Naive thymus-derived CD4-positive, alpha-beta T cell (primary cell): ENCODE measurements at regions of chr21 and their contacts with region 1.

Region 1: GRCh38 chr21:42009831-42010523 is at the start of gene ZBTB21:
- DNase-seq: peak; percentile 96 to 99 (median 98)
- ATAC-seq: peak; percentile 87
- H3K4me3 ChIP-seq: peak within 1 kb of the TSS; percentile 78
- H3K4me3 Mint-ChIP-seq: peak within 1 kb of the TSS; percentile 93 to 99 (median 96)
- H3K27ac ChIP-seq: peak within 1 kb of the TSS; percentile 92
- H3K27ac Mint-ChIP-seq: peak within 1 kb of the TSS; percentile 99 to 100 (median 99)
- H3K4me1 ChIP-seq: peaks cover 0 to 5% of the 10 kb centered on the region in 2 donors
- H3K4me1 Mint-ChIP-seq: peaks cover 7 to 48% (median 41%) of the 10 kb centered on the region in 7 donors
- H3K27me3 ChIP-seq: no peaks in the 10 kb centered on the region
- H3K27me3 Mint-ChIP-seq: peaks cover 0 to 24% (median 0%) of the 10 kb centered on the region in 5 donors
- total RNA-seq, gene ZBTB21: 16.8 to 137 (median 25.2) TPM

Region 2: GRCh38 chr21:41361786-41362604 is 648.0 kb before region 1 on chr21 and contains the start of gene MX2:
- CTCF ChIA-PET with region 1: no interaction called
- POLR2A ChIA-PET with region 1: no interaction called
- intact Hi-C with region 1: loop called (anchors 10 kb)
- DNase-seq: peak; percentile 64 to 96 (median 94)
- ATAC-seq: peak; percentile 86
- H3K4me3 ChIP-seq: peak within 1 kb of the TSS; percentile 84
- H3K4me3 Mint-ChIP-seq: peak within 1 kb of the TSS; percentile 90 to 98 (median 96)
- H3K27ac ChIP-seq: peak within 1 kb of the TSS; percentile 96
- H3K27ac Mint-ChIP-seq: peak within 1 kb of the TSS; percentile 99 to 100 (median 100)
- H3K4me1 ChIP-seq: peaks cover 21 to 38% of the 10 kb centered on the region in 2 donors
- H3K4me1 Mint-ChIP-seq: peaks cover 31 to 67% (median 60%) of the 10 kb centered on the region in 7 donors
- H3K27me3 ChIP-seq: no peaks in the 10 kb centered on the region
- H3K27me3 Mint-ChIP-seq: no peaks in the 10 kb centered on the region
- total RNA-seq, gene MX2: 84.8 to 116 (median 100) TPM

Region 3: DNA sequence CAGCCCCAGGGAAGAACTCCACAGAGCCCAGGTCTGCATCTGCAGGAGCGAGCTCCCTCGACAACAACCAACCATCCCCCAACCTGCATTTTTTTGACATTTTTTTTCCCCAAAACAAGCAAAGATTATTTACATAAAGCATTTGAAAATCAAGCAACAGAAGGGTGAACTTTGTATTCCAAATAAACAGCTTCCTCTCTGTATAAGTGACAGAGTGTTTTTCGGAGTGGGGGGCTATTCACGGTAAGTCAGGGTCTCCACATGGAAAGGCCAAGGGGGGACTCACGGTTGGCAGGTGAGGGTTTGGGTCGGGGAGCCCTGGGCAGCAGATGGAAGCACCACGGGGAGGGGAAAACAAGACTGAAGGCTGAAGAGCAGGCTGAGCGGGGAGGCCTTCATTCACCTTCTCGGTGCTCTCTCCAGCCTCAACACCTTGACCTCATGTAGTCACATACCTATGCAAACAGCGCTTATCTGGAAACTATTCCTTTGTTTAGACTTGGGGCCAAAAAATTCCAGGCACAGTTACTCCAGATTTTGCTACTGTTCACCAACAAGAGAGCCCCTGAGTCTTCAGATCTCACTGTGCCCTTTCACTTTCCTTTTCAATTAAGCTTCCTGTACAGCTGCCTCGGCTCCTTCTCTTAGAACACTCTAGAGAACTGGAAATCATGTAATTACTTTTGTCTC is 83.7 kb before region 1 on chr21:
- CTCF ChIA-PET with region 1: no interaction called
- POLR2A ChIA-PET with region 1: interaction called, 4 read pairs
- intact Hi-C with region 1: loop called (anchors 1 kb)
- DNase-seq: peak in 8 of 9 donors; percentile 36 to 75 (median 66)
- ATAC-seq: peak; percentile 85
- H3K4me3 ChIP-seq: peak overlapping the region; percentile 78
- H3K4me3 Mint-ChIP-seq: peak overlapping the region; percentile 88 to 99 (median 95)
- H3K27ac ChIP-seq: peak overlapping the region; percentile 91
- H3K27ac Mint-ChIP-seq: peak overlapping the region; percentile 94 to 100 (median 99)
- H3K4me1 ChIP-seq: peaks cover 12 to 37% of the 10 kb centered on the region in 2 donors
- H3K4me1 Mint-ChIP-seq: peaks cover 45 to 69% (median 61%) of the 10 kb centered on the region in 7 donors
- H3K27me3 ChIP-seq: no peaks in the 10 kb centered on the region
- H3K27me3 Mint-ChIP-seq: no peaks in the 10 kb centered on the region

Region 4: DNA sequence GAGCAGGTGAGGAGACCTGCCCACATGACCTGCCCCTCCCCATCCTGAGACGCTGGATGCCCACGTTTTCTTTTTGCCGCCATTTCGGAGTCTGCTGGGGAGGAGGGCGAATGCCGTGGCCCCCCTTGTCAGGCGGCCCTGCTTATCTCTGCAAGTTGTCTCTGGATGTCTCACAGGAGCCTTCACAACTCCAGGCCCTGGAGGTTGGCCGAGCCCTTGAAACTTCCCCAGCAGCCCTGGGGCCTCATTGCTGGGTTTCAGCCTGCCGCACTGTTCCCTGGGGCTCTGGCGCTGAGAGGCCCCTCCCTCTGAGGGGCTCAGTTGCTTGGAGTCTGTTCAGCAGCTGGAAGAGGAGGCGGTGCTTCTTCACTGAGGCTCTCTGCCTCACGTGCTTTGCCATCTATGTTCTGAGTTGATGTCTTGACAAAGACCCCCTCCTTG is 30.0 kb after region 1 on chr21:
- CTCF ChIA-PET with region 1: no interaction called
- POLR2A ChIA-PET with region 1: no interaction called
- intact Hi-C with region 1: no loop called
- DNase-seq: no peak
- ATAC-seq: no peak
- H3K4me3 ChIP-seq: no peak overlapping the region
- H3K4me3 Mint-ChIP-seq: no peak overlapping the region
- H3K27ac ChIP-seq: no peak overlapping the region
- H3K27ac Mint-ChIP-seq: peak overlapping the region in 1 of 9 donors; percentile 55
- H3K4me1 ChIP-seq: no peaks in the 10 kb centered on the region
- H3K4me1 Mint-ChIP-seq: peaks cover 0 to 16% (median 11%) of the 10 kb centered on the region in 7 donors
- H3K27me3 ChIP-seq: no peaks in the 10 kb centered on the region
- H3K27me3 Mint-ChIP-seq: no peaks in the 10 kb centered on the region

Region 5: DNA sequence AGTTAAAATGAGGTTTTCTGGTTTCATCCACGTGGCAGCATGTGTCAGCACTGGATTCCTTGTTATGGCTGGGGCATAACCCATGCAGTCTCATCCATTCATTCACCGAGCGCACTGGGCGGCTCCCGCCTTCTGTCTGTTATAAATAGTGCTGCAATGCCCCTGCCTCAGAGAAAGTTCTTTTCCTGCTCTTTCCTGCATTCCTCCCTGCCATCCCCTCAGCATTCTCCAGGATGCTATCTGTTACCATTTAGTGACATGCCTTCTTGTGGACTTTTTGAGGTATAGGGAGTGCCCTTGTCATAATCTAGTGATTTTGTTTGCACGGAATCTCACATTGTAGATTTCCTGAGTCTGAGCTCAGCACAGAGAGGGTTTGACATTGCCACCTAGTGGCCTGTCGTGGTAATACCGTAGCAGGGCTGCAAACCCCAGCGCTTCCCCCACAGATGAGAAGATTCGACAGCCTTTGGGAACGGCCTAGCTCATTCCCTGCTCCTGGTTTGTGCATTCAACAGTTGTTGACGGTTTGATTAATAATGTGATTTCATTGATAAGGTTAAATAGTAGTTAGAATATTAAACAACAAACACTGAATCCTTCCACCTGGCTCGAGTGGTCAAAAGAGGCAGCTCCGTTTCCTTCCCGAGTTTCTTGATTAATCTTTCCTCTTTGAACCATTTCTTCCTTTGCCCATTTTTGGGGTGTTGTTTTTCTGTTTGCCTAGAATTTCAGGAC is 107.4 kb after region 1 on chr21:
- CTCF ChIA-PET with region 1: interaction called, 8 read pairs
- POLR2A ChIA-PET with region 1: interaction called, 6 read pairs
- intact Hi-C with region 1: loop called in 1 of 2 experiments (anchors 1 kb)
- DNase-seq: peak; percentile 48 to 82 (median 70)
- ATAC-seq: peak; percentile 91
- H3K4me3 ChIP-seq: no peak overlapping the region
- H3K4me3 Mint-ChIP-seq: peak overlapping the region in 7 of 10 donors; percentile 31 to 82 (median 57)
- H3K27ac ChIP-seq: no peak overlapping the region
- H3K27ac Mint-ChIP-seq: peak overlapping the region in 3 of 9 donors; percentile 6 to 65 (median 52)
- H3K4me1 ChIP-seq: peaks cover 0 to 5% of the 10 kb centered on the region in 2 donors
- H3K4me1 Mint-ChIP-seq: peaks cover 18 to 33% (median 25%) of the 10 kb centered on the region in 7 donors
- H3K27me3 ChIP-seq: peaks cover 0 to 5% of the 10 kb centered on the region in 2 donors
- H3K27me3 Mint-ChIP-seq: peaks cover 44 to 68% (median 53%) of the 10 kb centered on the region in 5 donors

Region 6: DNA sequence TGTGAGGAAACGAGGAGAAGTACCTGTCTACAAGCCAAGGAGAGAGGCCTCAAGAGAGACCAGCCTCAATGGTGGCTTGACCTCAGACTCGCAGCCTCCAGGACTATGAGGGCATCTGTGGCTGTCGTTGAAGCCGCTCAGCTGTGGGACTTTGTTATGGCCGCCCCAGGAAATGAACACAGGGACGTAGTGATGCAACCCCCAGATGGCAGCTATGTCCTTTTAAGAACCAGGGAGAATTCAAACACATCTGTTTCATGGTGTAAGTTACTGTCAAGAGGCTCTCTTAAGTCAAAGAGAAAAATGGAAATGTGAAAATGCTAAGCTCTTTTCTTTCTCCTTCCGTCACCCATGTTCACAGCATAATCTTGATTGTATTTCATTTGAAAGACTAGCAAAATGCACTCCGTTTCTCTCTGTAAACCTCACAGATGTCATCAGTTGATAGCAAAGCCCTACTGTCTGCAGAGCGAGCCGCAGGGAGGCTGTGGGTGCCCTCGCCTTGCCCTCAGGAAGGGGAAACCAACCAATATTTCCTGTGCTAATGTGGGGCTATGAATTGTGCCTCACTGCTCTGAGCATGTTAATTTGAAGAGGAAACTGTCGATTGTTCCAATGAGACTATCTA is 415.1 kb after region 1 on chr21:
- CTCF ChIA-PET with region 1: no interaction called
- POLR2A ChIA-PET with region 1: no interaction called
- intact Hi-C with region 1: loop called in 1 of 2 experiments (anchors 10 kb)
- DNase-seq: peak; percentile 44 to 90 (median 84)
- ATAC-seq: peak; percentile 94
- H3K4me3 ChIP-seq: peak overlapping the region; percentile 22
- H3K4me3 Mint-ChIP-seq: peak overlapping the region; percentile 54 to 86 (median 80)
- H3K27ac ChIP-seq: peak overlapping the region; percentile 85
- H3K27ac Mint-ChIP-seq: peak overlapping the region; percentile 83 to 94 (median 89)
- H3K4me1 ChIP-seq: peaks cover 68 to 71% of the 10 kb centered on the region in 2 donors
- H3K4me1 Mint-ChIP-seq: peaks cover 59 to 88% (median 81%) of the 10 kb centered on the region in 7 donors
- H3K27me3 ChIP-seq: no peaks in the 10 kb centered on the region
- H3K27me3 Mint-ChIP-seq: peaks cover 0 to 6% (median 0%) of the 10 kb centered on the region in 5 donors

Region 7: DNA sequence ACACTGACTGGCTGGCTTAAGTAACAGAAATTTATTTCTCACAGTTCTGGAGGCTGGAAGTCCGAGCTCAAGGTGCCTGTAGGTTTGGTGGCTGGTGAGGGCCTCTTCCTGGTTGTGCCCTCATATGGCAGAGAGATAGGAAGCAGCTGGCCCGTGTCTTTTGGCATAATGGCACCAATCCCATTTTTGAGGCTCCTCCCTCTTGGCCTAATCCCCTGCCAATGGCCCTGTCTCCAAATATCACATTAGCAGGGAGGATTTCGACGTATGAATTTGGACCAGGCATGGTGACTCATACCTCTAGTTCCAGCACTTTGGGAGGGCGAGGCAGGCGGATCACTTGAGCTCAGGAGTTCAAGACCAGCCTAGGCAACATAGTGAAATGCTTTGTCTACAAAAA is 1892.5 kb after region 1 on chr21:
- CTCF ChIA-PET with region 1: no interaction called
- POLR2A ChIA-PET with region 1: no interaction called
- intact Hi-C with region 1: no loop called
- DNase-seq: no peak
- ATAC-seq: no peak
- H3K4me3 ChIP-seq: no peak overlapping the region
- H3K4me3 Mint-ChIP-seq: no peak overlapping the region
- H3K27ac ChIP-seq: no peak overlapping the region
- H3K27ac Mint-ChIP-seq: peak overlapping the region in 2 of 9 donors; percentile 62 to 81
- H3K4me1 ChIP-seq: no peaks in the 10 kb centered on the region
- H3K4me1 Mint-ChIP-seq: peaks cover 19 to 52% (median 24%) of the 10 kb centered on the region in 7 donors
- H3K27me3 ChIP-seq: no peaks in the 10 kb centered on the region
- H3K27me3 Mint-ChIP-seq: no peaks in the 10 kb centered on the region